Left cardiac atrium (tissue), 4 donors: ENCODE measurements at regions of chr1 and their contacts with region 1.

Region 1: GRCh38 chr1:99645699-99646531 is at the start of gene PALMD:
- DNase-seq: peak; percentile 74
- ATAC-seq: peak; percentile 70 to 80
- total RNA-seq, gene PALMD: 80.7 to 104 TPM

Region 2: GRCh38 chr1:99533909-99534637 is 111.8 kb before region 1 on chr1:
- intact Hi-C with region 1: loop called in 1 of 2 experiments (anchors 5 kb)
- DNase-seq: no peak
- ATAC-seq: peak in 1 of 2 donors; percentile 30

Region 3: GRCh38 chr1:99544328-99544727 is 101.6 kb before region 1 on chr1:
- intact Hi-C with region 1: loop called in 1 of 2 experiments (anchors 5 kb)
- DNase-seq: no peak
- ATAC-seq: peak in 1 of 2 donors; percentile 37

Region 4: DNA sequence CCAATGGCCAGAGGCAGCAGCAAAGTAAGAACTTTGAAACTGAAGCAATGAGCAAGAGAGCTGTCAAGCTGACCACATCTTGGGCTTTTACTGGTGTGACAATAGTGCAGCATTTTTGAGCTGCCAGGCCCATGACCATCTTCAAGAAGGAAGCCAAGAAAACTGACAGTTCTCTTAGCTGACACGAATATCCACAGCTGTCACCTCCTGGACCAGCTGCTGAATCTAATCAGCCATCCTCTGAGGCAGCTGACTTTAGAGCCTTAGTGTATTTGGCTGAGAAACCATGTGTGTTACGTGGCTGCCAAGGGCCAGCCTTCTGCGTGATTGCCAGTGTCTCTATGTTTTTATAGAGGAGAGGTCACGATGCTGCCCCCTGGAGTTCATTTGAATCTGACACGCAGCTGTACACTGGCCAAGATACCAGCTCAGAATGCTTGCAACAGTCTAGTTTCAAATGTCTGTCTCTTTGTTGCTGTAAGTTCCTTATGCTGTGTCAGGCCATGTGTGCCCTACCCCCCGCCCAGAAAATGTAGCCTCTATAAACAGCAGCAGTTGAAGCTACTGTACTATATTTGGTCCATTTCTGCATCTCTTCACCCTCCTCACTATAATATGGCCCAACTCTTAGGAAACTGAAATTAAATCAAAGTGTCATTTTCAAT is 39.7 kb after region 1 on chr1:
- intact Hi-C with region 1: loop called in 1 of 2 experiments (anchors 5 kb)
- DNase-seq: peak; percentile 86
- ATAC-seq: peak; percentile 90 to 94